Posterior cingulate gyrus (tissue), 11 donors: ENCODE measurements at regions of chr19 and their contacts with region 1.

Region 1: DNA sequence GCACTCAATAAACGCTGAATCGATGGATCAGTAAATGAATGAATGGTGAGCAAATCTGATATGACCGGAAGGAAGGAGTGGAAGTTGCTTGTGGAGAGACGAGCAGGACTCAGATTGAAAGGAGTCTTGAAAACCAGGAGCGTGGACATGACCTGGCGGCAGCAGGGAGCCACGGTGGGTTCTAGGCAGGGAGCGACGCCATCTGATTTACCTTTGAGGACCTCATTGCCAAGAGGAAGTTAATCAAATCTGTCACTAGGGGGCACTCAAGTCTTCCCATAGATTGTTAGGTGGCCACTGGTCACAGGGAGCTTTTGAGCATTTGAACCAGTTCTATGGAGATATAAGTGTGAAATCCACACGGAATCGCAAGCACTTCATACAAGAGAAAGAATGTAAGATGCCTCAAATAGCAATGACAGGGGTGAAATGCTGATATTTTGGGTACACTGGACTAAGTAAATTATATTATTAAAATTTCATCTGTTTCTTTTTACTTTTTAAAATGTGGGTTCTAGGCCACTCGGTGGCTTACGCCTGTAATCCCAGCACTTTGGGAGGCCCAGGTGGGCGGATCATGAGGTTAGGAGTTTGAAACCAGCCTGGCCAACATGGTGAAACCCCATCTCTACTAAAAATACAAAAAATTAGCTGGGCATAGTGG is 9.2 kb upstream of the FBN3 start:
- DNase-seq: peak in 3 of 10 donors; percentile 31 to 57 (median 37)

Region 2: DNA sequence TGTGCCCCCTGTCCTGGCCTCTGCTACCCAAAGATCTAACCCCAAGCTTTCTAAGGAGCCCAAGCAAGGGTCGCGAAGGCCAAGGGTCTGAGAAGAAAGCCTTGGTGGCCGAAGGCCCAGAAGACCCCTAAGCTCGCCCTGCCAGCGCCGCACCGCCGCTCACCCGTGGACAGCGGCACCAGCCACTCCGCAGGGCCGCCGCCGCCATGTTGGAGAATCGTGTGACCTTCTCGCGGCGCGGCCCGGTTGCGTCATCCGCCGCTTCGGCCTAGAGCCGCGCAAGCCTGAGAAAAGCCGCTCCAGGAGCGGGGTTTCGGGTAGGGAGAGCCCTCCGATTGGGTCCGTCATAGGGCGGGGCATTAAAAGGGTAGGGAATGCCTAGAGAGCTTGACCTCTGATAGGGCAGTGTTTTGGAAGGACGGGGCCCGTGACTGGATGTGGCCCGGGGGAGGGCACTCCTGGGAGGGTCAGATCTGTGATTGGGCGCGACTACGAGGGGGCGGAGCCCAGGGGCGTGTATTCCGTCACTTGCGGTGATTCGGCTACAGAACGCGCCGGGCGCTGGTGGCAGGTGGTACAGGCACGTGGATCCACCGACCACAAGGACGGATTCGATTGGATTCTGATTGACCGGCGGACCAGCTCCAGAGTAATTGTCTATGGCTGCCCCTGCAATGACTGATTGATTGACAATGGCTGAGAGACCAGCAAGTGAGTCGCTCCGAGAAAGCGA is 214.9 kb before region 1 on chr19 and contains the start of gene TIMM44:
- intact Hi-C with region 1: loop called (anchors 10 kb)
- DNase-seq: peak; percentile 98 to 100 (median 100)

Region 3: GRCh38 chr19:8208922-8209461 is 50.4 kb after region 1 on chr19 and contains the start of gene CERS4:
- intact Hi-C with region 1: loop called (anchors 5 kb)
- DNase-seq: peak; percentile 79 to 98 (median 84)